ENCODE measurements at regions of chr2 and their contacts with region 1.

Region 1: GRCh38 chr2:225889446-225889850 is 489.9 kb downstream of the NYAP2 start:
- DNase-seq: peak; percentile 75
- ATAC-seq: peak; percentile 94
- H3K4me3 ChIP-seq: no peak overlapping the region
- H3K27ac ChIP-seq: peak overlapping the region; percentile 66
- H3K4me1 ChIP-seq: peaks cover 23% of the 10 kb centered on the region
- H3K27me3 ChIP-seq: no peaks in the 10 kb centered on the region
- CTCF ChIP-seq: peak; percentile 84

Region 2: GRCh38 chr2:225735844-225736243 is 153.6 kb before region 1 on chr2:
- CTCF ChIA-PET with region 1: no interaction called
- POLR2A ChIA-PET with region 1: no interaction called
- intact Hi-C with region 1: loop called (anchors 2 kb)
- DNase-seq: peak; percentile 95
- ATAC-seq: peak; percentile 48
- H3K4me3 ChIP-seq: no peak overlapping the region
- H3K27ac ChIP-seq: peak overlapping the region; percentile 81
- H3K4me1 ChIP-seq: peaks cover 34% of the 10 kb centered on the region
- H3K27me3 ChIP-seq: no peaks in the 10 kb centered on the region
- CTCF ChIP-seq: no peak

Region 3: GRCh38 chr2:226023383-226023782 is 133.9 kb after region 1 on chr2:
- CTCF ChIA-PET with region 1: no interaction called
- POLR2A ChIA-PET with region 1: no interaction called
- intact Hi-C with region 1: loop called (anchors 10 kb)
- DNase-seq: peak; percentile 14
- ATAC-seq: no peak
- H3K4me3 ChIP-seq: no peak overlapping the region
- H3K27ac ChIP-seq: no peak overlapping the region
- H3K4me1 ChIP-seq: no peaks in the 10 kb centered on the region
- H3K27me3 ChIP-seq: no peaks in the 10 kb centered on the region
- CTCF ChIP-seq: no peak; the same call in 1 of the 2 replicates

Region 4: GRCh38 chr2:226215902-226216503 is 326.6 kb after region 1 on chr2:
- CTCF ChIA-PET with region 1: interaction called, 5 read pairs
- POLR2A ChIA-PET with region 1: no interaction called
- intact Hi-C with region 1: loop called (anchors 5 kb)
- DNase-seq: peak; percentile 69
- ATAC-seq: peak; percentile 63
- H3K4me3 ChIP-seq: no peak overlapping the region
- H3K27ac ChIP-seq: no peak overlapping the region
- H3K4me1 ChIP-seq: peaks cover 32% of the 10 kb centered on the region
- H3K27me3 ChIP-seq: no peaks in the 10 kb centered on the region
- CTCF ChIP-seq: peak; percentile 89

Region 5: GRCh38 chr2:226256237-226256636 is 366.8 kb after region 1 on chr2:
- CTCF ChIA-PET with region 1: no interaction called
- POLR2A ChIA-PET with region 1: no interaction called
- intact Hi-C with region 1: loop called (anchors 1 kb)
- DNase-seq: peak; percentile 76
- ATAC-seq: peak; percentile 95
- H3K4me3 ChIP-seq: no peak overlapping the region
- H3K27ac ChIP-seq: peak overlapping the region; percentile 64
- H3K4me1 ChIP-seq: peaks cover 11% of the 10 kb centered on the region
- H3K27me3 ChIP-seq: no peaks in the 10 kb centered on the region
- CTCF ChIP-seq: no peak

Region 6: GRCh38 chr2:226411727-226412360 is 522.4 kb after region 1 on chr2:
- CTCF ChIA-PET with region 1: no interaction called
- POLR2A ChIA-PET with region 1: no interaction called
- intact Hi-C with region 1: loop called (anchors 2 kb)
- DNase-seq: peak; percentile 96
- ATAC-seq: peak; percentile 98
- H3K4me3 ChIP-seq: no peak overlapping the region
- H3K27ac ChIP-seq: peak overlapping the region; percentile 78
- H3K4me1 ChIP-seq: peaks cover 21% of the 10 kb centered on the region
- H3K27me3 ChIP-seq: no peaks in the 10 kb centered on the region
- CTCF ChIP-seq: no peak

Region 7: GRCh38 chr2:226618875-226619605 is 729.6 kb after region 1 on chr2:
- CTCF ChIA-PET with region 1: no interaction called
- POLR2A ChIA-PET with region 1: no interaction called
- intact Hi-C with region 1: loop called (anchors 10 kb)
- DNase-seq: no peak
- ATAC-seq: no peak
- H3K4me3 ChIP-seq: no peak overlapping the region
- H3K27ac ChIP-seq: no peak overlapping the region
- H3K4me1 ChIP-seq: peaks cover 10% of the 10 kb centered on the region
- H3K27me3 ChIP-seq: no peaks in the 10 kb centered on the region
- CTCF ChIP-seq: no peak

Measured in PC-3 (cell line).